AG04449 (cell line): ENCODE measurements at regions of chr19 and their contacts with region 1.

Region 1: GRCh38 chr19:35013031-35013819 is 13.1 kb downstream of the GRAMD1A start:
- DNase-seq: no peak
- H3K4me3 ChIP-seq: no peak overlapping the region
- CTCF ChIP-seq: peak; percentile 96

Region 2: DNA sequence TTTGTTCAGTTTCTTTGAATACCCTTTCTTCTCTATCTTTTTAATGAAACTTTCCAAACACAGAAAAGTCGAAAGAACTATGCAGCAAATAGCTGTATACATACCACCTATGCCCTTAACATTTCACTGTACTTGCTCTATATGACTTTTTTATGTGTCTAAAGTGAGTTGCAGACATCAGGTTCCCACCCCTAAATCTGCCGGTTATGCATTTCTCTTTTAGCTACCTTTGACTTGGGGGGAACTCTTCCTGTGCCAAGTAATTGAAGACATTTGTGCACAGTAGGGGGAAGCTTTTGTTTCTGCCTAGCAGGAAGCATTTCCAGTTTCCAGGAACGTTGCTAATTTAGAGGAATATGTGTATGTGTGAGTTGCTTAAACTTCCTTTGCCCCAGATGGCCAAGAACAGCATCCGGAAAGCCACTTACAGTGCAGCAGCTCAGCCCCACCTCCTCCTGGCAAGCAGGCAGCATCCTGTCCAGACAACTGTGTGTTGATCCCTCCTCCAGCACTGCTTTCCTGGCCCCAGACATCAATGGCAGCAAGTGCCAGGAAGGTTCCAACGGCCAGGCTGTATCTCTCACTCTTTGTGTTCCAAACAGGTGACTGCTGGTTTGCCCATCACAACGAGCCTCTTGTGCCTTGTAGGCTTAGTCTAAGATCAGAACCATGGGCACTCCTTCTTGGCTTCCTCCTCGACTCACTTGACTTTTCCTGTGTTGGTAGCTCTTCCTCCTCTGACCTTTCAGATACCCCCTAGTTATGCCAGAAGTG is 27.8 kb before region 1 on chr19:
- CTCF ChIA-PET with region 1: interaction called, 15 read pairs
- POLR2A ChIA-PET with region 1: no interaction called
- DNase-seq: no peak
- H3K4me3 ChIP-seq: no peak overlapping the region
- CTCF ChIP-seq: no peak

Region 3: GRCh38 chr19:34999498-35000341 is 13.5 kb before region 1 on chr19 and contains the start of gene GRAMD1A:
- CTCF ChIA-PET with region 1: interaction called, 30 read pairs
- POLR2A ChIA-PET with region 1: interaction called, 3 read pairs
- DNase-seq: no peak
- H3K4me3 ChIP-seq: peak within 1 kb of the TSS; percentile 73
- CTCF ChIP-seq: no peak